ENCODE measurements at regions of chr3 and their contacts with region 1.

Region 1: DNA sequence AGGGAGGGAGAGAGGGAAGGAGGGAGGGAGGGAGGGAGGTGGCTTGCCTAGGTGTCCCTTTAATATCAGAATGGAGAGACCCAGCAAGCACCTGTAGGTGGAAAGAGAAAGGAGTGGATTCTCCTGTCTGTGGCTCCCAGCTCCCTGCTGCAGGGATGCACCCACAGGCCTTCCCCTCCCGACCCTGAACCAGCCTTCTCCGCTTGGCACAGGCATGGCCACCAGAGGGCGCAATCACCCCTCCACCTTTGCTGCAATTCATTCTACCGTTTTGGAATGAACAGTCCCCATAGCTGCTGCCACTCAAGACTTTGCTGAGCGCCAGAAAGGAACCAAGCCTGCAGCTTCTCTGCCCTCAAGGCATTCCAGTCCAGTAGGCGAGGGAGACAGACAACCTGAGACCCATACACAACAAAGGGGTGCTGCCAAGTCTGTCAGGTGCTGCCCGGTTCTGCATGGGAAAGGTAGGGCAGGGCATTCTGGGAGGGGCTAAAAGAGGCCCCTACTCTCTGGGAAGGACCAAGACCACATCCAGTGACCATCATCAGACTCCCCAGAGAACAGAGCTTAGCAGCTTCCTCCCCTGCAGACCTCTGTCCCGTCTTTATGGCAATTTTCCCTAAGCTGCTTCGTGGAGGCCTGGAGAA is 4.9 kb downstream of the TLR9 start:
- DNase-seq: peak; percentile 95
- ATAC-seq: peak; percentile 71
- H3K4me3 Mint-ChIP-seq: peak overlapping the region; percentile 12
- H3K27ac Mint-ChIP-seq: no peak overlapping the region
- H3K4me1 Mint-ChIP-seq: peaks cover 83% of the 10 kb centered on the region
- H3K27me3 Mint-ChIP-seq: no peaks in the 10 kb centered on the region
- CTCF ChIP-seq: peak; percentile 79

Region 2: DNA sequence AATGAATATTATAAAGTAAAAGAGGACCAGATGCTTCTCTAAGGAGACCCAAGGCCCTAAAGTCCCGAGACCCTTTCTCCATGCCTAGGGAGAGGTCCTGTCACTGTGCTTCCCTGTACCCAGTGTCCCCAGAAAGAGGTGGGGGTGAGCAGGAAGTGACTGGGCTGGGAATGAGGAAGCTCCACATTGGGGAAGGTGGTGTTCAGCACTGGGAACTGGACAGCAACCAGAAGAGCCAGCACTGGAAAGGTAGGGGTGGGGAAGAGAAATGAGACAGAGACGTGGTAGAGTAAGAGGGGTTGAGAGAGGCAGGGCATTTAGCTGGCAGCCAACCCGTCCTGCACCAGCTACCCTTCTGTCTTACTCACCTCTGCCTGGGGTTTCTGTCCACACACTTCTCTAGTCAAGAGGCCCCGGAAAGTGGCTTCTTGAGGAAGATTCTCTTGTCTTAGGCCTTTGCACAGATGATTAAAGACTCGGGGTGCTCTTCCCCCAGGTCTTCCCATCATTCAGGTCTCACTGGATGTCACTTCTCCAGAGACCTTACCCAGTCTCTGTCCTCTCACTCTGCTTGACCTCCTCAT is 291.0 kb before region 1 on chr3:
- CTCF ChIA-PET with region 1: no interaction called
- POLR2A ChIA-PET with region 1: no interaction called
- intact Hi-C with region 1: no loop called
- DNase-seq: no peak
- ATAC-seq: no peak
- H3K4me3 Mint-ChIP-seq: no peak overlapping the region
- H3K27ac Mint-ChIP-seq: no peak overlapping the region
- H3K4me1 Mint-ChIP-seq: no peaks in the 10 kb centered on the region
- H3K27me3 Mint-ChIP-seq: no peaks in the 10 kb centered on the region
- CTCF ChIP-seq: no peak

Region 3: GRCh38 chr3:52023860-52024764 is 196.4 kb before region 1 on chr3:
- CTCF ChIA-PET with region 1: no interaction called
- POLR2A ChIA-PET with region 1: no interaction called
- intact Hi-C with region 1: no loop called
- DNase-seq: no peak
- ATAC-seq: no peak
- H3K4me3 Mint-ChIP-seq: no peak overlapping the region
- H3K27ac Mint-ChIP-seq: no peak overlapping the region
- H3K4me1 Mint-ChIP-seq: no peaks in the 10 kb centered on the region
- H3K27me3 Mint-ChIP-seq: no peaks in the 10 kb centered on the region
- CTCF ChIP-seq: no peak

Region 4: GRCh38 chr3:52197842-52198668 is 22.4 kb before region 1 on chr3 and contains the start of gene ALAS1:
- CTCF ChIA-PET with region 1: interaction called, 71 read pairs
- POLR2A ChIA-PET with region 1: interaction called, 5 read pairs
- intact Hi-C with region 1: no loop called
- DNase-seq: peak; percentile 95
- ATAC-seq: peak; percentile 97
- H3K4me3 Mint-ChIP-seq: peak within 1 kb of the TSS; percentile 99
- H3K27ac Mint-ChIP-seq: peak within 1 kb of the TSS; percentile 93
- H3K4me1 Mint-ChIP-seq: peaks cover 52% of the 10 kb centered on the region
- H3K27me3 Mint-ChIP-seq: no peaks in the 10 kb centered on the region
- CTCF ChIP-seq: no peak
- total RNA-seq, gene ALAS1: 54.3 to 54.6 TPM

Region 5: GRCh38 chr3:52231502-52232293 is 11.2 kb after region 1 on chr3:
- CTCF ChIA-PET with region 1: interaction called, 198 read pairs
- POLR2A ChIA-PET with region 1: interaction called, 107 read pairs
- intact Hi-C with region 1: no loop called
- DNase-seq: peak; percentile 89
- ATAC-seq: peak; percentile 82
- H3K4me3 Mint-ChIP-seq: peak overlapping the region; percentile 8
- H3K27ac Mint-ChIP-seq: peak overlapping the region; percentile 82
- H3K4me1 Mint-ChIP-seq: peaks cover 62% of the 10 kb centered on the region
- H3K27me3 Mint-ChIP-seq: no peaks in the 10 kb centered on the region
- CTCF ChIP-seq: peak; percentile 96

Region 6: GRCh38 chr3:52253314-52254304 is 33.1 kb after region 1 on chr3:
- CTCF ChIA-PET with region 1: interaction called, 13 read pairs
- POLR2A ChIA-PET with region 1: interaction called, 6 read pairs
- intact Hi-C with region 1: no loop called
- DNase-seq: peak; percentile 96
- ATAC-seq: peak; percentile 88
- H3K4me3 Mint-ChIP-seq: peak overlapping the region; percentile 70
- H3K27ac Mint-ChIP-seq: peak overlapping the region; percentile 99
- H3K4me1 Mint-ChIP-seq: peaks cover 85% of the 10 kb centered on the region
- H3K27me3 Mint-ChIP-seq: no peaks in the 10 kb centered on the region
- CTCF ChIP-seq: no peak

Region 7: GRCh38 chr3:52291508-52292181 is 71.1 kb after region 1 on chr3:
- CTCF ChIA-PET with region 1: interaction called, 12 read pairs
- POLR2A ChIA-PET with region 1: interaction called, 949 read pairs
- intact Hi-C with region 1: no loop called
- DNase-seq: peak; percentile 63
- ATAC-seq: peak; percentile 28
- H3K4me3 Mint-ChIP-seq: no peak overlapping the region
- H3K27ac Mint-ChIP-seq: no peak overlapping the region
- H3K4me1 Mint-ChIP-seq: peaks cover 22% of the 10 kb centered on the region
- H3K27me3 Mint-ChIP-seq: no peaks in the 10 kb centered on the region
- CTCF ChIP-seq: peak; percentile 78

Measured in activated CD8-positive, alpha-beta T cell treated with anti-CD3 and anti-CD28 coated beads for 36 hours (primary cell).